GM12878 (cell line): ENCODE measurements at regions of chrX and their contacts with region 1.

Region 1: DNA sequence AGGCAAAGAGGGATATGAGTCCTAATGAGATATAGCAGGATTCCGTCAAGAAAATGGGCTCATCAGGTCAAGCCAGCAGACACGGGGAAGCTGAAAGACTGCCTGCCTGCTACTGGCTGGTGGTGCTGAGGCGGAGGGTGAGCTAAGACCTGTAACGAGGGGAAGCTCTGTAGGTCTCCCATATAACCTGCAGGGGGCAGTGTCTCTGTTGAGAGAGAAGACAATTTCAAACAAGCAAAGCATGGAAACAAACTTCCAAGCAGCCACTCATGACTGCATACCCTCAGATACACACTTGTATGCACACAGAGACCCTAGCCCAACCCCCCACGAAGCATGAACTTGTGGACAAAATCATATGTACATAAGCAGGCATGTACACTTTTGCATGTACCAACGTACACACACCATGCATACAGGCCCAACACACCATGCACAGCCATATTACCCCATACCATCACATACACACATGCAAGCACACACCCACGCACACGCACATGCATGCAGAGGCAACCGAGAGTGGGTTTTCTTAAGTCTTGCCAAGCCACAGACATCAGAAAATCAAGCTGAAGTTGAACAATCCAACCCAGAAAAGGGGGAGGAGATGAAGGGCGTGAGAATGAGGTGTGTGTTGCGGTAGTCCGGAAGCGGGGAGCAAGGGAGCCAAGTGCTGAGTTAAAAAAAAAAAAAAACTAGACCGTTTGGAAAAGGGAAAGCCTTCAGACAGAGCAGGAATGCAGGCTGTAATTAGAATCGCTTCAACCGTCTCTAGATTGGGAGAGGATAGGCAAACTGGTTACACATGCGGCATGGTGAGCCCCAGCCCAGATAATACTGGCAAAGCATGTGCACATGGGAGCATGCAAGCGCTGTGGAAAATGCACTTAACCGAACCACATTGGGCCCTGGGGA is 71.0 kb downstream of the PJA1 start:
- DNase-seq: no peak
- ATAC-seq: peak; percentile 86
- H3K4me3 ChIP-seq: no peak overlapping the region
- H3K27ac ChIP-seq: no peak overlapping the region
- H3K4me1 ChIP-seq: no peaks in the 10 kb centered on the region
- H3K27me3 ChIP-seq: no peaks in the 10 kb centered on the region; a peak in 1 of 4 replicates
- CTCF ChIP-seq: peak; percentile 49 to 64 (median 56)
- EP300 ChIP-seq: no peak
- POLR2A ChIP-seq: no peak
- RAD21 ChIP-seq: peak; percentile 18; the same call in 1 of the 2 replicates

Region 2: DNA sequence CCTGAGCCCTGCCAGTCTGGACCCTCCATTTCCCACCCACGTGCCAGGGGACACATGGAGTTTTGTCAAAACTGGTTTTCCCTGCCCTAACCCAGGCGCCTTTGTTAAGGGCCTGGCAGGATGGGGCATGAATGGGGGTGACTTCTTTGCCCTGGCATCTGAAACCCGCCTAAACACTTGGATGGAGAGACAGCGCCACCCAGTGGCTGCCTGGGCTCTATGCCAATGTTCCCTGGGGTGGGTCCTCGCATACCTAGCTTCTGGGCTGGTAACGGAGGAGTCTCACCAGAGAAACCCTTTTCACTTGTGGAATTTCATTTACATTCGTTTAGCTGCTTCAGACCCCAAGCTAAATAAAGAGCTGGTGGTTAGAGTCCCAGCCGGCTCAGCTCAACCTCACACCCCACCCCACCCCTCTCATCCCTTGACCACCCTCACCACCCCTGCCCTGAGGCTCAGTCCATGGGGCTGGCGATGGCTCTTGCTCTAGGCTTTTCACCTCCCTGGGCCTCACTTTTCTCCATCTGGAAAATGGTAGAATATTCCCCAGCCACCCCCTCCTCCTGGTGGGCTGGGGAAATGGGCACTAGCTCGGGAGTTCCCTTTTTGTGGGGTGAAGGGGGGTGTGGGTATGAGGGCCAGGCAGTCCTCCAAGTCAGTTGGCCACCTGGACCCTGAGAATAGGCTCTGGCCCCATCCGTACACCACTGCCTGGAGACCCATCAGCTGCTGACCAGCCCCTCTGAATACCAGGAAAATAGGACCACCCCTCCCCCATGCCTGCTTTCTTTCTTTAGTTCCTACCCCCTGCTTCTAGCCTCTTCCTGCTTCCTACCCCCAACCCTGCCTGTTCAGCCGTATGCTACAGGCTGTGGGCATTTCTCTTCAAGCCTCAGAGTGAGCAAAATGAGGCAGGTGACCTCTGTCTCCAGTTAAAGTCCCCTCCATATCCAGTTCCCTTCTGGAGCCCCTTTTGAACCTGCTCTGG is 128.2 kb after region 1 on chrX:
- CTCF ChIA-PET with region 1: interaction called, 4 read pairs
- POLR2A ChIA-PET with region 1: interaction called, 5 read pairs
- RAD21 ChIA-PET with region 1: interaction called, 3 read pairs
- SMC1A ChIA-PET with region 1: interaction called, 4 read pairs
- in situ Hi-C with region 1: no loop called
- intact Hi-C with region 1: loop called (anchors 1 kb)
- DNase-seq: no peak
- ATAC-seq: peak; percentile 95
- H3K4me3 ChIP-seq: no peak overlapping the region
- H3K27ac ChIP-seq: no peak overlapping the region
- H3K4me1 ChIP-seq: no peaks in the 10 kb centered on the region
- H3K27me3 ChIP-seq: no peaks in the 10 kb centered on the region; a peak in 2 of 4 replicates
- CTCF ChIP-seq: peak; percentile 64 to 73 (median 71)
- EP300 ChIP-seq: no peak
- POLR2A ChIP-seq: no peak
- RAD21 ChIP-seq: peak; percentile 83

Region 3: GRCh38 chrX:69285881-69286564 is 191.8 kb after region 1 on chrX:
- CTCF ChIA-PET with region 1: interaction called, 4 read pairs
- POLR2A ChIA-PET with region 1: no interaction called
- RAD21 ChIA-PET with region 1: no interaction called
- SMC1A ChIA-PET with region 1: no interaction called
- in situ Hi-C with region 1: no loop called
- intact Hi-C with region 1: loop called (anchors 1 kb)
- DNase-seq: no peak
- ATAC-seq: peak; percentile 95
- H3K4me3 ChIP-seq: no peak overlapping the region
- H3K27ac ChIP-seq: no peak overlapping the region
- H3K4me1 ChIP-seq: no peaks in the 10 kb centered on the region
- H3K27me3 ChIP-seq: no peaks in the 10 kb centered on the region
- CTCF ChIP-seq: peak; percentile 82 to 98 (median 84)
- EP300 ChIP-seq: no peak
- POLR2A ChIP-seq: no peak
- RAD21 ChIP-seq: peak; percentile 84